Activated B cell treated with CpG ODN at 0.5 μM for 24 hours (primary cell): ENCODE measurements at regions of chr13 and their contacts with region 1.

Region 1: GRCh38 chr13:51452361-51453206 is at the start of gene INTS6:
- DNase-seq: peak; percentile 97
- ATAC-seq: peak; percentile 74
- H3K4me3 Mint-ChIP-seq: peak within 1 kb of the TSS; percentile 91
- H3K27ac Mint-ChIP-seq: peak within 1 kb of the TSS; percentile 98
- H3K4me1 Mint-ChIP-seq: peaks cover 39% of the 10 kb centered on the region
- H3K27me3 Mint-ChIP-seq: no peaks in the 10 kb centered on the region
- CTCF ChIP-seq: no peak
- total RNA-seq, gene INTS6: 55.3 and 68.7 TPM in 2 replicates

Region 2: DNA sequence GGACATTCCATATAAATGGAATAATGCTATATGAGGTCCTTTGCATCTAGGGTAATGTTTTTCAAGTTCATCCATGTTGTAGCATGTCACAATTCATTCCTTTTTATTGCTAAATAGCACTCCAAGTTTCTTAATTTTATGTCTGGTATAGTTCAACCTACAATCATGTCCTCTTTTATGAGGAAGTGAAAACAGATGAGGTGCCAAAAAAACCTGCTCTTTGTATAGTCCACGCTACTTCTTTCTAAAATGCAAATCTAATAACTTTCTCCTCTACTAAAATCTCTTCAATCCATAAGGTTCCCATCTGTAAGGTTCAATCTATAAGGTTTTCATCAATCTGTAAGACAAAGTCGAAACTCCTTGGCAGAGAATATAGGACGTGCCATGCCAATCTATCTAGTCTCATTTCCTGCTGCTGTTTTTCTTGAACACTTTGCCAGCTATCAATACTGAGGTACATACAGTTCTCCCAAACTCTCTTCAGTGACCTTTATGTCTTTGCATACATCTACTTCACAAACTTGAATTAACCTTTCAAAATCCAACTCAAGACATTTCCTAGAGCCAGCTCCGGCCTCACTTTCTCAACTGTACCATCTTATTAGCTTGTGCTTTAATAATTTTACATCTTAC is 33.5 kb before region 1 on chr13:
- CTCF ChIA-PET with region 1: no interaction called
- POLR2A ChIA-PET with region 1: interaction called, 13 read pairs
- intact Hi-C with region 1: loop called (anchors 2 kb)
- DNase-seq: no peak
- ATAC-seq: peak; percentile 76
- H3K4me3 Mint-ChIP-seq: peak overlapping the region; percentile 64
- H3K27ac Mint-ChIP-seq: peak overlapping the region; percentile 85
- H3K4me1 Mint-ChIP-seq: peaks cover 83% of the 10 kb centered on the region
- H3K27me3 Mint-ChIP-seq: no peaks in the 10 kb centered on the region
- CTCF ChIP-seq: no peak

Region 3: DNA sequence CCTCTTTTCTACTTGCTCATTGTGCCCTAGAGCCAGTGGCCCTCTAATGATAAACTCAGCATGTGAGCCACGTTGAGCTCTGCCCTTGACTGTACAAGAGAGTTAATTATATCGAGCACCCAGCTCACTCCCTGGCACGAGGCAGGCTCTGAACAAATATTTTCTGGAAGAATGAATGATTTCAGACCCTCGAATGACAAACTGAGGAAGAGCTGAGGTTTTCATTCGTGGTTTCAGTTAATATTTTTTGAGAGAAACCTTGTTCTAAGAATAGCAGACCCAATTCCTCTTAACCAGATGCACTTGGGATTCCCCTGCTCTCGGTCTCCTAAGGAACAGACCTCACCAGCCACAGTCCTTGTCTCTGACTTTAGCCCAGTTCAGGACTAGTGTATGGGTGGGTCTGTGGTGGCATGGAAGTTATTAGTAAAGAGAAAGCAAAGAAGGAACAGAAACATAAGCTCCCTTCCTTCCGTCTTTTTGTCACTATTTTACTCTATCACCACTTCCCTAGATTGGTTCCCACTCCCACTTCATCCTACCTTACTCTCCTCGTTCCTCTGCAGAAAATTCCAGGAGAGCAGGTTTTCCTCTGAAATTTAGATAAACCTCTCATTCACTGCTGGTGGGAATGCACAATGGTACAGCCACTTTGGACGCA is 109.6 kb after region 1 on chr13:
- CTCF ChIA-PET with region 1: no interaction called
- POLR2A ChIA-PET with region 1: interaction called, 13 read pairs
- intact Hi-C with region 1: no loop called
- DNase-seq: no peak
- ATAC-seq: peak; percentile 62
- H3K4me3 Mint-ChIP-seq: peak overlapping the region; percentile 46
- H3K27ac Mint-ChIP-seq: peak overlapping the region; percentile 50
- H3K4me1 Mint-ChIP-seq: peaks cover 34% of the 10 kb centered on the region
- H3K27me3 Mint-ChIP-seq: no peaks in the 10 kb centered on the region
- CTCF ChIP-seq: no peak

Region 4: DNA sequence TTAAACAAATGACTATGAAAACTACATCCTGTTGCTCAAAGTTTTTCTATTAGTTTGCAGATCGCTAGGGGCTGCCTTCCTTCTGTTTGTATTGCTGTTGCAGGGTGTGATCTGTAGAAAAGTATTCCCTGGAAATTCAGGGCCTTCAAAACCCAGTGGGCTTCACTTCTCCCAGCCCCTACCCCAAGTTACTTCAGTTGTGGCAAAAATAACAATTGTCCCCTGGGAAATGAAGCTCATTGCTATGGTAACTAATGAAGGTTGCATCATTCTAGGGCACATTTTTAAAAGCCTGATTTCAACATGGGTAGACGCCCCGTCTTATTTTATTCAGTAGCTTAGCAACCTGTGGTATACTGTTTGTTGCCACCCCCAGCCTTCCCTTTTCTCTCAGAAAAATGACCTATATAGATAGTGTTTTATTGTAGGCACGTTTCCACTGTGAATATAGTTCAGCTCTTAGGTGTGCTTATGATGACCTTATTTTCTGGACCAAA is 192.6 kb after region 1 on chr13:
- CTCF ChIA-PET with region 1: no interaction called
- POLR2A ChIA-PET with region 1: interaction called, 23 read pairs
- intact Hi-C with region 1: loop called (anchors 1 kb)
- DNase-seq: no peak
- ATAC-seq: peak; percentile 78
- H3K4me3 Mint-ChIP-seq: peak overlapping the region; percentile 62
- H3K27ac Mint-ChIP-seq: peak overlapping the region; percentile 90
- H3K4me1 Mint-ChIP-seq: peaks cover 59% of the 10 kb centered on the region
- H3K27me3 Mint-ChIP-seq: no peaks in the 10 kb centered on the region
- CTCF ChIP-seq: no peak

Region 5: GRCh38 chr13:51825165-51825592 is 372.6 kb after region 1 on chr13:
- CTCF ChIA-PET with region 1: no interaction called
- POLR2A ChIA-PET with region 1: interaction called, 12 read pairs
- intact Hi-C with region 1: no loop called
- DNase-seq: no peak
- ATAC-seq: no peak
- H3K4me3 Mint-ChIP-seq: peak overlapping the region; percentile 15
- H3K27ac Mint-ChIP-seq: no peak overlapping the region
- H3K4me1 Mint-ChIP-seq: peaks cover 79% of the 10 kb centered on the region
- H3K27me3 Mint-ChIP-seq: peaks cover 5% of the 10 kb centered on the region
- CTCF ChIP-seq: no peak

Region 6: GRCh38 chr13:52450012-52450792 is 997.6 kb after region 1 on chr13 and contains the start of gene VPS36:
- CTCF ChIA-PET with region 1: no interaction called
- POLR2A ChIA-PET with region 1: no interaction called
- intact Hi-C with region 1: loop called (anchors 2 kb)
- DNase-seq: peak; percentile 97
- ATAC-seq: peak; percentile 67
- H3K4me3 Mint-ChIP-seq: peak within 1 kb of the TSS; percentile 97
- H3K27ac Mint-ChIP-seq: peak within 1 kb of the TSS; percentile 93
- H3K4me1 Mint-ChIP-seq: peaks cover 39% of the 10 kb centered on the region
- H3K27me3 Mint-ChIP-seq: no peaks in the 10 kb centered on the region
- CTCF ChIP-seq: peak; percentile 95
- total RNA-seq, gene VPS36: 51.8 and 60.6 TPM in 2 replicates